Aorta (tissue), 5 donors: ENCODE measurements at regions of chr7 and their contacts with region 1.

Region 1: GRCh38 chr7:50782384-50783208 is at the start of gene GRB10:
- DNase-seq: peak; percentile 56 to 85
- ATAC-seq: peak; percentile 79
- H3K4me3 ChIP-seq: peak within 1 kb of the TSS in 1 of 2 donors; percentile 28
- H3K27ac ChIP-seq: no peak within 1 kb of the TSS
- H3K4me1 ChIP-seq: no peaks in the 10 kb centered on the region
- H3K27me3 ChIP-seq: no peaks in the 10 kb centered on the region
- total RNA-seq, gene GRB10: 106 to 108 TPM

Region 2: GRCh38 chr7:50628434-50629084 is 154.0 kb before region 1 on chr7:
- intact Hi-C with region 1: loop called in 1 of 2 experiments (anchors 10 kb)
- DNase-seq: peak in 1 of 2 donors; percentile 47
- ATAC-seq: no peak
- H3K4me3 ChIP-seq: no peak overlapping the region
- H3K27ac ChIP-seq: no peak overlapping the region
- H3K4me1 ChIP-seq: peaks cover 0 to 10% of the 10 kb centered on the region in 2 donors
- H3K27me3 ChIP-seq: no peaks in the 10 kb centered on the region

Region 3: GRCh38 chr7:50739744-50740435 is 42.7 kb before region 1 on chr7:
- intact Hi-C with region 1: loop called in 1 of 2 experiments (anchors 5 kb)
- DNase-seq: no peak
- ATAC-seq: no peak
- H3K4me3 ChIP-seq: no peak overlapping the region
- H3K27ac ChIP-seq: no peak overlapping the region
- H3K4me1 ChIP-seq: peaks cover 0 to 1% of the 10 kb centered on the region in 2 donors
- H3K27me3 ChIP-seq: no peaks in the 10 kb centered on the region